Left colon (tissue), 2 donors: ENCODE measurements at regions of chr11 and their contacts with region 1.

Region 1: GRCh38 chr11:106076919-106077608 is at the start of gene KBTBD3:
- DNase-seq: peak; percentile 98 to 99
- ATAC-seq: peak; percentile 93
- total RNA-seq, gene KBTBD3: 5.5 to 6.5 TPM

Region 2: DNA sequence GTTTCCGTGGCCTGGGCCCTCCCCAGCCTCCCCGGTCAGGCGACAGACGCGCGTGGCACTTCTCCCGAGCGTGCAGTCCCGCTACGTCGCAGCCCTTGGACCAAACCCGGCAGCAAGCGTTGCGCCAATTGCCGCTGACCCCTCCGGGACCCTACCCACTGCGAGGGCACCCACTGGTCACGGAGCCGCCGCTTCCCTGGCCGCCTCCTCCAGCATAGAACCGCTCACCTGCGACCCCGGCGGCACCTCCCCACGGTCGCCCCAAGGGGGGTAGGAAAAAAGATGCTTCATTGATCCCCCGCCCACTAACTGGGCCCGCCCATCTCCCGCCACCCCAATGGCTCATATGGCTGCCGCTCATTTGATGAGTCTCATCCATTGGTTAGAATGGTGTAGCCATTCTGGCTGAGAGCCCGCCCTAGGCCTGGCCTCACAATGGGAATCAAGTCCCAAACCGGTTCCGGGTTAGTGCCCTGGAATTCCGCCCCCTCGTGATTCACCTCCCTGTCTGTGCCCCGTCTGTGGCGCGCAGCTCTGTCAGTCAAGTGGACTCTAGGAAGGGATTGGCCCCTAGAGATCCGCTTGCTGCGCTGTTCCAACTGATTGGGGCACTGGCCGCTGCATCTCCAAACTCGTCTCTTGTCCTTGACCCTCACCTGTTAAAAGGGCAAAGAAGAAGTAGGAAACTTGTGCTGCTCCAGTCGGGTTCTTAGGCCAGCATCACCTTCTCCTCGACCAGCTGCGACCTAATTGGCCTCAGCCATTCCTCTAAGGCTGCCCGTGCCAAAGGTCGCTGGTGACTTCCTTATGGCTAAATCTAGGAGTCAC is 54.9 kb before region 1 on chr11 and contains the start of gene MSANTD4:
- intact Hi-C with region 1: loop called in 1 of 2 experiments (anchors 5 kb)
- DNase-seq: peak; percentile 97 to 100
- ATAC-seq: peak; percentile 96
- total RNA-seq, gene MSANTD4: 6.7 to 8.2 TPM

Region 3: DNA sequence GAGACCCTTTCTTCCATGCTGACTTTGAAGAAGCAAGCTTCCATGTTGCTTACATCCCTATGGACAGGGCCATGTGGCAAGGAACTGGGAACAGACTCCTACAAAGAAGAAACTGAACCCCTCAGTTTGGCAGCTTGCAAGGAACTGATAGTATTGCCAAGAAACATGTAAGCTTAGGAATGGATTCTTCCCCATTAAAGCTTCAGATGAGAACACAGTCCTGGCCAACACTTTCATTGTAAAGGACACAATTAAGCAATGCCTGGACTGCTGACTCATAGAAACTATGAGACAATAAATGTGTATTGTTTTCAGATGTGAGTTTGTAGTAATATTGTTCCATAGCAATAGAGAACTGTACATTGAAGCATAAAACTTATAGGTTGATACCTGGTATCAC is 82.8 kb after region 1 on chr11:
- intact Hi-C with region 1: no loop called
- DNase-seq: no peak
- ATAC-seq: no peak